Common myeloid progenitor, CD34-positive (primary cell): ENCODE measurements at regions of chr9 and their contacts with region 1.

Region 1: GRCh38 chr9:34500623-34501267 is 22.0 kb downstream of the ENHO start:
- DNase-seq: peak; percentile 42 to 71 (median 58)
- H3K4me3 ChIP-seq: no peak overlapping the region
- H3K27ac ChIP-seq: no peak overlapping the region
- H3K4me1 ChIP-seq: no peaks in the 10 kb centered on the region
- H3K27me3 ChIP-seq: peaks cover 0 to 12% (median 0%) of the 10 kb centered on the region in 5 experiments

Region 2: GRCh38 chr9:34171753-34172535 is 328.8 kb before region 1 on chr9:
- CTCF ChIA-PET with region 1: no interaction called
- POLR2A ChIA-PET with region 1: no interaction called
- DNase-seq: peak; percentile 83 to 91 (median 90)
- H3K4me3 ChIP-seq: no peak overlapping the region
- H3K27ac ChIP-seq: no peak overlapping the region
- H3K4me1 ChIP-seq: peaks cover 0 to 39% (median 22%) of the 10 kb centered on the region in 4 experiments
- H3K27me3 ChIP-seq: no peaks in the 10 kb centered on the region

Region 3: GRCh38 chr9:34403554-34404380 is 97.0 kb before region 1 on chr9:
- CTCF ChIA-PET with region 1: interaction called, 23 read pairs
- POLR2A ChIA-PET with region 1: no interaction called
- DNase-seq: peak; percentile 25 to 61 (median 46)
- H3K4me3 ChIP-seq: no peak overlapping the region
- H3K27ac ChIP-seq: no peak overlapping the region
- H3K4me1 ChIP-seq: peaks cover 0 to 2% (median 0%) of the 10 kb centered on the region in 4 experiments
- H3K27me3 ChIP-seq: no peaks in the 10 kb centered on the region

Region 4: DNA sequence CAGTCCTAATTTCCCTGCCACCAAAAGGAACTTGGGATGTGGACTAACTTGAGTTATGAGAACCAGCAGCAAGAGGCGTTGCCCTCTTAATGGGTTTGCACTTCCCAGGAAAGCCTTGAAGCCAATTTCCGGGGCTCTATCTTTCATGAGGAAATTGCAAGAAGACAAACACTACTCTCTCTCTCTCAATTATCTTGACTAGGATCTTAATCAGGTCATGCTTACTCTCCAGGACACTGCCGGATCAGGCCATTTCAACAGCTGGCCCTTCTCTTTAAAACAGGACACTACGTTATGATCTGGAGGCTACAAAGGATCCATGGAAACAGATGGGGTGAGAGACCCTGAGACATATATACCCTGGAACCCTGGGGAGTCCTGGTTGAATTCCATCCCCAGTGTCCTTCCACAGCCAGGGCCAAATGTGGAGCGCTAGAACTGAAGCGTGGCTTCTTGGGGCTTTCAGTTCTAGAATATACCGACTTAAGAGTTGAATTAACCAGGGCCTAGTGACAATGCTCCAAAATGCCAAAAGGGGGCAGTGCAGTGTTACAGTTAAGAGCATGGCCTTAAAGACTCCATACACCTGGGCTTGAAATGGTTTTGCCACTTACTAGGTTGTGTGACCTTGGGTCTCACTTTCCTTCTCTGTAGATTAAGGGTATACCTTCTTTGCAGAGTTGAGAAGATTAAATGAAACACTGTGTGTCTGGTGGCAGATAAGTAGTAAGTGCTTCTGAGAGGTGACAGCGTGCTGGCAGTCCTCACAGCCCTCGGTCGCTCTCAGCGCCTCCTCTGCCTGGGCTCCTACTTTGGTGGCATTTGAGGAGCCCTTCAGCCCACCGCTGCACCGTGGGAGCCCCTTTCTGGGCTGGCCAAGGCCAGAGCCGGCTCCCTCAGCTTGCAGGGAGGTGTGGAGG is 63.5 kb before region 1 on chr9:
- CTCF ChIA-PET with region 1: interaction called, 60 read pairs
- POLR2A ChIA-PET with region 1: no interaction called
- DNase-seq: peak; percentile 84 to 93 (median 87)
- H3K4me3 ChIP-seq: no peak overlapping the region
- H3K27ac ChIP-seq: no peak overlapping the region
- H3K4me1 ChIP-seq: peaks cover 0 to 19% (median 13%) of the 10 kb centered on the region in 4 experiments
- H3K27me3 ChIP-seq: no peaks in the 10 kb centered on the region

Region 5: GRCh38 chr9:34451545-34451944 is 49.2 kb before region 1 on chr9:
- CTCF ChIA-PET with region 1: interaction called, 24 read pairs
- POLR2A ChIA-PET with region 1: no interaction called
- DNase-seq: peak in 2 of 3 donors; percentile 22 to 23
- H3K4me3 ChIP-seq: no peak overlapping the region
- H3K27ac ChIP-seq: no peak overlapping the region
- H3K4me1 ChIP-seq: peaks cover 0 to 23% (median 12%) of the 10 kb centered on the region in 4 experiments
- H3K27me3 ChIP-seq: no peaks in the 10 kb centered on the region

Region 6: GRCh38 chr9:34522971-34523797 is 22.4 kb after region 1 on chr9 and contains the start of gene ENHO:
- CTCF ChIA-PET with region 1: interaction called, 10 read pairs
- POLR2A ChIA-PET with region 1: no interaction called
- DNase-seq: peak; percentile 85 to 93 (median 91)
- H3K4me3 ChIP-seq: peak within 1 kb of the TSS in 5 of 7 experiments; percentile 0 to 65 (median 50)
- H3K27ac ChIP-seq: no peak within 1 kb of the TSS
- H3K4me1 ChIP-seq: peaks cover 0 to 16% (median 13%) of the 10 kb centered on the region in 4 experiments
- H3K27me3 ChIP-seq: peaks cover 5 to 25% (median 12%) of the 10 kb centered on the region in 5 experiments

Region 7: GRCh38 chr9:34559624-34560452 is 59.1 kb after region 1 on chr9:
- CTCF ChIA-PET with region 1: no interaction called
- POLR2A ChIA-PET with region 1: no interaction called
- DNase-seq: no peak
- H3K4me3 ChIP-seq: no peak overlapping the region
- H3K27ac ChIP-seq: no peak overlapping the region
- H3K4me1 ChIP-seq: no peaks in the 10 kb centered on the region
- H3K27me3 ChIP-seq: peaks cover 0 to 59% (median 27%) of the 10 kb centered on the region in 5 experiments